ENCODE measurements at regions of chr2 and their contacts with region 1.

Region 1: DNA sequence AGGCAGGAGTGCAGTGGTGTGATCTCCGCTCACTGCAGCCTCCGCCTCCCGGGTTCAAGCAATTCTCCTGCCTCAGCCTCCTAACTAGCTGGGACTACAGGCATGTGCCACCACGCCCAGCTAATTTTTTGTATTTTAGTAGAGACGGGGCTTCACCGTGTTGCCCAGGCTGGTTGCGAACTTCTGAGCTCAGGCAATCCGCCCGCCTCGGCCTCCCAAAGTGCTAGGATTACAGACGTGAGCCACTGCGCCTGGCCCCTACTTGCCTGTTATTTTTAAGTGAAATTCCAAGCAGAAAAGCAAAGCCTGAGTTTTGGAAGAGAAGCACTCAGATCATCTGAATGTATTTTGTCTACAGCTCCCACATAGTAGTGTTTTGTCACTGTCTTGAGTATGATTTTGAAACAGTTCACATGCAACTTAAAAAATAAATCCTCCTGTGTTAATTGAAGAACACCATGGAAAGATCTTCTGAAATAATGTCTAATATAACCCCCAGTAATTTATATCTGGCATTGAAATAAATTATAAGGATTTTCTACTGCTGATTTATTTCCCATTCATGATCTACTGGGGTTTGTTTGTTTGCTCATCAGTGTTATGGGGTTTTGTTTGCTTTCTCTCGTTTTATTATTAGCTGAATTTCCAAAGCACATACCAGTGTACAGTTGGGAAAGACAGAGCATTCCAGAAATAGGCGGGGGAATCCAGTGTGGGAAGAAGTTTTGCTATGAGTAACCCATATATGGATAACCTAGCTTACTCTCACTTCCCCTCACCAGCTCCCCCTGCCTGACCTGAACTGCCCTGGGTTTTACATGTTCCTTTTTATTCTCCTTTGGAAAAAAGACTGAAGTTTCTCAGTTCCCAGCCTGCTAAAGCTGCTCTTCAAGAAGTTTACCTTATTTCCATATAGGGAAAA is 80.1 kb upstream of the MAP3K20 start:
- DNase-seq: peak; percentile 87
- H3K4me3 ChIP-seq: no peak overlapping the region
- H3K27ac ChIP-seq: peak overlapping the region; percentile 65
- H3K27me3 ChIP-seq: no peaks in the 10 kb centered on the region
- CTCF ChIP-seq: peak; percentile 58

Region 2: DNA sequence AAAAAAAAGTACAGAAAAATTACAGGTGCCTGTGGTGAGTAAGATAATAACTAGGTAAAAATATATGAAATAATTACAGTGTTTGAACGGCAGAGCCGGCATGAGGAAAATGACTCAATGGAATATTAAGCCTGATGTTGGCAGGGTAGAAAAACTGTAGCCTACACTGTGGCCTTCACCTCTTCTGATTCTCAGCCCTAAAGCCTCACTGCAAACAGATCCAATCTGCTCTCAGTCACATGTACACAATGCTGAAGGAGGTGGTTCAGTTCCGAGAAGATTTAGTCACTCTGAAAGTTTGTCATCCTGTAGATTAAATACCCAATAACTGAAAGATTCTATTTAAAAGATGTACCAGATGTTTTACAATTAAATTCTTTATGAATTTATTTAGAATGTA is 13.2 kb after region 1 on chr2:
- CTCF ChIA-PET with region 1: interaction called, 18 read pairs
- POLR2A ChIA-PET with region 1: no interaction called
- DNase-seq: no peak
- H3K4me3 ChIP-seq: no peak overlapping the region
- H3K27ac ChIP-seq: no peak overlapping the region
- H3K27me3 ChIP-seq: no peaks in the 10 kb centered on the region
- CTCF ChIP-seq: no peak

Region 3: GRCh38 chr2:173822889-173823542 is 827.4 kb after region 1 on chr2:
- CTCF ChIA-PET with region 1: no interaction called
- POLR2A ChIA-PET with region 1: no interaction called
- DNase-seq: no peak
- H3K4me3 ChIP-seq: no peak overlapping the region
- H3K27ac ChIP-seq: no peak overlapping the region
- H3K27me3 ChIP-seq: peaks cover 43% of the 10 kb centered on the region
- CTCF ChIP-seq: no peak